Lower lobe of right lung (tissue), 2 donors: ENCODE measurements at regions of chr3 and their contacts with region 1.

Region 1: DNA sequence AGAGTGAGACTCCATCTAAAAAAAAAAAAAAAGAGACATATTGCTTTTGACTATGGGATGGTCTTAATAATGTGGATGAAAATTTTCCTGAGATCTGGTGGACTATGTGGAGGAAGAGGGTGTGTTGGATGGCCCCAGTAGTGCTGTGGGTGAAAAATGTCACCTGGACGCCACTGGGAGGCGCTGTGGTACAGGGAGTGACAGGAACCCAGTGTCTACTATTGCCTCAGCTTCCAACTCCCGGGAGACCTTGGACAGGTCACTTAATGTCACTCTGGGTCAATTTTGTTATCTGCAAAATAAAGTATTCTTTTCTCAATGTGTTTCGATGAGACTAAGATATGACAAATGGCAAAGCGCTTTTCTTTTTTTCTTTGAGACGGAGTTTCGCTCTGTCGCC is 27.7 kb upstream of the DCP1A start:
- DNase-seq: peak; percentile 70
- ATAC-seq: peak; percentile 95 to 97
- H3K4me3 ChIP-seq: no peak overlapping the region
- H3K27ac ChIP-seq: no peak overlapping the region
- H3K4me1 ChIP-seq: no peaks in the 10 kb centered on the region
- H3K27me3 ChIP-seq: no peaks in the 10 kb centered on the region
- CTCF ChIP-seq: peak; percentile 77

Region 2: GRCh38 chr3:52851348-52851747 is 523.7 kb before region 1 on chr3:
- intact Hi-C with region 1: no loop called
- DNase-seq: no peak
- ATAC-seq: peak; percentile 83 to 85
- H3K4me3 ChIP-seq: no peak overlapping the region
- H3K27ac ChIP-seq: no peak overlapping the region
- H3K4me1 ChIP-seq: peaks cover 5% of the 10 kb centered on the region
- H3K27me3 ChIP-seq: no peaks in the 10 kb centered on the region
- CTCF ChIP-seq: peak; percentile 52

Region 3: GRCh38 chr3:52998730-52999509 is 376.1 kb before region 1 on chr3:
- intact Hi-C with region 1: no loop called
- DNase-seq: no peak
- ATAC-seq: peak; percentile 74 to 76
- H3K4me3 ChIP-seq: no peak overlapping the region
- H3K27ac ChIP-seq: no peak overlapping the region
- H3K4me1 ChIP-seq: no peaks in the 10 kb centered on the region
- H3K27me3 ChIP-seq: no peaks in the 10 kb centered on the region
- CTCF ChIP-seq: no peak

Region 4: DNA sequence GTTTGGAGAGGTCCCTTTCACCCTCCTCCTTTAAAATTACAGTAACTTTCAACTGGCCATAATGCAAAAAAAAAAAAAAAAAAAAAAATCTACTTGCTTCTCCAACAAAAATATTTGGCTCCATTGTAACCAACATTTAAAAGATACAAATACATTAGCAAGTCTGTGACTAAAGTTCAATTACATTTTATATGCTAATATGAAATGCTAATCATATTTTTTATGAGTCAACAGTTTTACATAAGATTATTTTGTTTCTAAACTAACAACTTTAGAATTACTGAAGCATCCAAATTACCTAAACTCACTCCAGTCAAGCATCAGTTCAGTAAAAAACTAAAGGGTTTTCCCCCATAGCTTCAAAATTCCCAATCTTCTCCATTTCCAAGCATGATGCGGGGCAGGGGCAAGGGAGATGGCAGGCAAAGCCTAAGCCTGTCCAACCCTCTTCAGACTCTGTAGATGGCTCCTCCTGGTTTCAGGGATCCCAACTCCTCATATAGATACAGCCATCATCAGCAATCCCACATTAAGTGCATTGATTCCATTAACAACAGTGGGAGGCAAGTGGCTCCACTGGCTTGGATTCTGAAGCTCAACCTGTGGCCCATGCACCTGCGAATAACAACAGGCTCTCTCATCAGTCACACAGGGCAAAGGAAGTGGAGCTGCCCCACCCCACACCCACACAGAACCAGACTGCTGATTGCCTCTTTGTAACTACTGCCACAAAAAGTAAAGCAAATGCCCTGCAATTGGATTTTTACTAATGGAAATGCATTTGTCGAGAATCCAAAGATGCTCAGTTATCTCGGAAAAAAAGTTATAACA is 344.2 kb before region 1 on chr3:
- intact Hi-C with region 1: no loop called
- DNase-seq: no peak
- ATAC-seq: no peak
- H3K4me3 ChIP-seq: no peak overlapping the region
- H3K27ac ChIP-seq: no peak overlapping the region
- H3K4me1 ChIP-seq: peaks cover 7% of the 10 kb centered on the region
- H3K27me3 ChIP-seq: no peaks in the 10 kb centered on the region
- CTCF ChIP-seq: no peak

Region 5: DNA sequence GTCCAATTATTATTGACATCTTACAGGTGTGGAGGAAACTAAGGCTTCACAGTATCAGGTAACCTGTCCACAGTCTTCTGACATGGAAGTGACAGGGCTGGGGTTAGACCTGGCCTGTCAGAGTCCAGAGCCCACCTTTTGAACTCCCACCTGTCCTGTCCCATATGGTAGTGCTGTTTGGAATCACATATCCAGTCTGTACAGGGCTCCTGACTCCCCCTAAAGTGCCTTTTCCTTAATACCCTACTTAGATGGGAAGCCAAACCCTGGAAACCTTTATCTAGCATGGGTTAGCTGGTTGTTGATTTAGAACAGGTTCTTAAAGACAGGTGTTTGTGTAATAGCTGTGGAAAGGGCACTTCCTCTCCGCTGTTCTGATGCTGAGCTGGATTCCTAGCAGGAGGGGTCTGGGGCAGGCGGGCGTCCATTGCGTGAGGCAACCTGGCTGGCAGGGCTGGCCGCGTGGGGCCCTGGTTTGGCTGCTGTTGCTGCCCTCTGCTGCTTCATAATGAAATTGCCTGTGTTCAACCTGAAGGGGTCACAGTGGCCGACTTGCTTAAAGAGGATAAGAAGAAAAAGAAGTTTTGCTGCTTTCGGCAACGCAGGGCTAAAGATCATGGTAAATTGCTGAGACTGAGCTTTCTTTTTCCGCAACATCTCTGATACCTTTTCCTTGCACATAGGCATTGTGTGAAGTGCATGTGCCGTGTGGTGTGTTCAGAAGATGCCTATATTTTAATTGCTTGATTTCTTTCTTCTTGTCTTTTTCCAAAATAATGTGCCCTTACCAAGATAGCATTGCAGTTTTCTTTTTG is 335.0 kb after region 1 on chr3:
- intact Hi-C with region 1: loop called (anchors 10 kb)
- DNase-seq: peak; percentile 89
- ATAC-seq: peak; percentile 80 to 86
- H3K4me3 ChIP-seq: no peak overlapping the region
- H3K27ac ChIP-seq: peak overlapping the region; percentile 24
- H3K4me1 ChIP-seq: peaks cover 63% of the 10 kb centered on the region
- H3K27me3 ChIP-seq: no peaks in the 10 kb centered on the region
- CTCF ChIP-seq: peak; percentile 82